Activated CD4-positive, alpha-beta T cell treated with anti-CD3 and anti-CD28 coated beads for 36 hours (primary cell): ENCODE measurements at regions of chr14 and their contacts with region 1.

Region 1: GRCh38 chr14:35201066-35201465 is 78.7 kb downstream of the PRORP start:
- DNase-seq: peak; percentile 18
- ATAC-seq: peak; percentile 50
- H3K4me3 Mint-ChIP-seq: peak overlapping the region; percentile 31
- H3K27ac Mint-ChIP-seq: peak overlapping the region; percentile 83
- H3K4me1 Mint-ChIP-seq: peaks cover 48% of the 10 kb centered on the region
- H3K27me3 Mint-ChIP-seq: no peaks in the 10 kb centered on the region

Region 2: DNA sequence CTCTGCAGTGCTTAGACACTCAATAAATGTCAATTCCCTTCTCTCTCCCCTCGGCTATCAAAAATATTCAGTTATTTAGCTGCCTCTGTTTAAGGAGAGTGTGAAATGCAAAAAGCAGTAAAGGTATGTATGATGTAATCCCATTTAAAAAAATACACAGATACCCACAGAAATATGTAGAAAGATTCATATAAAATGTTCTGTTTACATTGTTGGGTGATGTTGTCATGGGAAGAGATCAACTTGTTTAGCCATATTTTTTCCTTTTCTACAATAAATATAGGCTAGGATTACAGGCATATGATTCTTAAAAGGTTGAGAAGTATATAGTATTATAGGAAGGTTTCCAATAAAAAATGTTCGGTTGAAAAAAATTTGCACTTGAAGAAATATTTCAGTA is 87.0 kb before region 1 on chr14:
- CTCF ChIA-PET with region 1: no interaction called
- POLR2A ChIA-PET with region 1: no interaction called
- intact Hi-C with region 1: no loop called
- DNase-seq: no peak
- ATAC-seq: no peak
- H3K4me3 Mint-ChIP-seq: no peak overlapping the region
- H3K27ac Mint-ChIP-seq: no peak overlapping the region
- H3K4me1 Mint-ChIP-seq: peaks cover 17% of the 10 kb centered on the region
- H3K27me3 Mint-ChIP-seq: no peaks in the 10 kb centered on the region

Region 3: GRCh38 chr14:35159742-35160409 is 41.2 kb before region 1 on chr14:
- CTCF ChIA-PET with region 1: no interaction called
- POLR2A ChIA-PET with region 1: no interaction called
- intact Hi-C with region 1: loop called in 1 of 2 experiments (anchors 5 kb)
- DNase-seq: no peak
- ATAC-seq: peak; percentile 85
- H3K4me3 Mint-ChIP-seq: peak overlapping the region; percentile 4
- H3K27ac Mint-ChIP-seq: peak overlapping the region; percentile 65
- H3K4me1 Mint-ChIP-seq: peaks cover 53% of the 10 kb centered on the region
- H3K27me3 Mint-ChIP-seq: no peaks in the 10 kb centered on the region

Region 4: GRCh38 chr14:35301735-35302528 is 100.9 kb after region 1 on chr14:
- CTCF ChIA-PET with region 1: no interaction called
- POLR2A ChIA-PET with region 1: interaction called, 13 read pairs
- intact Hi-C with region 1: no loop called
- DNase-seq: no peak
- ATAC-seq: peak; percentile 77
- H3K4me3 Mint-ChIP-seq: peak overlapping the region; percentile 42
- H3K27ac Mint-ChIP-seq: peak overlapping the region; percentile 81
- H3K4me1 Mint-ChIP-seq: peaks cover 66% of the 10 kb centered on the region
- H3K27me3 Mint-ChIP-seq: no peaks in the 10 kb centered on the region

Region 5: GRCh38 chr14:35341446-35342159 is 140.5 kb after region 1 on chr14:
- CTCF ChIA-PET with region 1: no interaction called
- POLR2A ChIA-PET with region 1: no interaction called
- intact Hi-C with region 1: no loop called
- DNase-seq: peak; percentile 41
- ATAC-seq: peak; percentile 54
- H3K4me3 Mint-ChIP-seq: no peak overlapping the region
- H3K27ac Mint-ChIP-seq: no peak overlapping the region
- H3K4me1 Mint-ChIP-seq: peaks cover 6% of the 10 kb centered on the region
- H3K27me3 Mint-ChIP-seq: no peaks in the 10 kb centered on the region